Gastrocnemius medialis (tissue), 4 donors: ENCODE measurements at regions of chr6 and their contacts with region 1.

Region 1: DNA sequence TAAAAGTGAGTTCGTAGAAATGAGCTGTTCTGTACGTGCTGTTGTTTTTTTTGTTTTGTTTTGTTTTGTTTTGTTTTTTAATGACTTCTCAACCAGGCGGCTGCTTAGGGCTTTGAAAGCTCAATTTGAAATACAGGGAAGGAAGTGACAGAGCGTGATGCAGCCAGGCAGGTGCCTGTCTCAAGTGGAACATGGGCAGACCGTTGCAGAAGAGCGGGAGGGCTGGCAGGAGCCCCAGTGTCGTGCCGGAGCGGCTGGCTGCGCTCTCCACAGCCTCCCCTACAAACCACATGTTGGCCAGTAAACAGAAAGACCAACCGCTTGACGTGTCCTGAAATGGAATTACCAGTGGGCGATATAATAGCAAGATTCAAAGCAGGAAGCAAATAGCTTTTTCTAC is 164.9 kb upstream of the RREB1 start:
- DNase-seq: peak; percentile 85 to 93
- ATAC-seq: peak; percentile 98 to 99
- H3K4me3 ChIP-seq: peak overlapping the region in 3 of 4 donors; percentile 0 to 24 (median 7)
- H3K27ac ChIP-seq: peak overlapping the region; percentile 81 to 91 (median 83)
- H3K4me1 ChIP-seq: peaks cover 13 to 18% of the 10 kb centered on the region in 2 donors
- H3K27me3 ChIP-seq: no peaks in the 10 kb centered on the region
- CTCF ChIP-seq: no peak
- POLR2A ChIP-seq: no peak

Region 2: DNA sequence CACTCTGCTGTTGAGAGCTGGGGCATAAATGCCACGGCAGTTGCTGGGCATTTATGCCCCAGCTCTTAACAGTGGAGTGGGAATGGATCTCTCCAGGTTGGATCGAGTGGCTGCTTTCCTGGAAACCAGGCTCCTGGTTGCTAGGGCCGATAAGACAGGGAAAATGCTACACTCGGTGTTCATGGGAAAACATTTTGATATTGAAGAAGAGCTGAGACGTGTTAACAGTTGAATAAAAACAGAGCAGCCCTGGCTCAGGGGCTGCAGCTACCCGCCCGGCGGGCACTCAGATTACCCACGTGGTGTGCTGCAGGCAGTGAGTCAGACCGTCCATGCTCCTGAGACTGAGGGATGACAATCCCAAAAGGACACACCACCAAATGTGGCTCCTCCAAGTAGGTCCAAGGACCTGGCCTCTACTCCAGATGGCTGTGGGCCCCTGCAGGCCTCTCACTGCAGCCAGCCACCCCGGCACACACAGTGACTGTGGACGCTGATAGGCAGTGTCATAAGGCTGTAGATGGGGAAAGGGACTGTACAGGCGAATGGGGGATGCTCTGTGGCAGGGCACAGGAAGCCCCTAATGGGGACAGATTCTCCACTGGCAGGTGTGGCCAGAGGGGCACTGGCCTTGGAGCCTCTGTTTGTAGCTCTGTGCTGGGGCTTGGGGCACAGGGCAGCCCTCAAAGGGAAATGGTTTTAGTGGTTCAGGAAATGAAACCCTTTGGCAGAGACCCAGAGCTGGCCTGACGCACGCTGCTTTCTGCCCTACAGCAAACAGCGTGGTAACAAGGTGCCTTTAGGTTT is 116.5 kb before region 1 on chr6:
- in situ Hi-C with region 1: no loop called
- intact Hi-C with region 1: no loop called
- DNase-seq: peak; percentile 88 to 95
- ATAC-seq: peak; percentile 73 to 82
- H3K4me3 ChIP-seq: peak overlapping the region; percentile 32 to 50 (median 39)
- H3K27ac ChIP-seq: peak overlapping the region; percentile 95 to 98 (median 98)
- H3K4me1 ChIP-seq: peaks cover 25 to 31% of the 10 kb centered on the region in 2 donors
- H3K27me3 ChIP-seq: no peaks in the 10 kb centered on the region
- CTCF ChIP-seq: no peak
- POLR2A ChIP-seq: peak; percentile 59 to 70

Region 3: DNA sequence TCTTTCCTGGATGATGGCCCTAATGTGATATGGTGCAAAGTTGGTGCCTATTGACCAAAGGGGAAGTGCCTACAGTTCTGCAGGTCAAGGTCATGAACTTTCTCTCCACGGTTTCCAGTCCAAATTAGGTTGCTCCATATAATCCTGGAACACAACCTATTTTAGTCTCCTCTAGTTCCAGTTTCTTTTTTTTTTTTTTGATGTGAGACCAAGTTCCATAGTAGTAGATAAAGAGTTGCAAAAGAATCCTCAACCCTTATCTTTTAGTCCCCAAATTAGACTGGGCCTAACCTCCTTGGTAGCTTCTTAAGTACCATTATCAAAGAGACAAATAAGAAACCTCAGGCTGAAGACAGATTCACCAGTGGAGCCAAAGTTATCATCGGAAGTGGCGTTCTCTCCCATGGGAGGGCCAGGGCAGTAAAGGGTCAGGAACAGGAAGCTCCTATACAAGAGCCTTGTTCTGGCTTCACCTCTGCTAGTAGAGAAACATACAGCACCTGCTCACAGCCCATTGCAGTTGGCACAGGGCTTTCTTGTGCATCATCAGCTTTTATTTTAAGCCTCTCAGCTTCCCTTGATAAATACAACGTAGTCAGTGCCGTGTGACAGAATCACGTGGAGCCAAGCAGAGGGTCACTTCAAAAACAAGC is 32.8 kb after region 1 on chr6:
- in situ Hi-C with region 1: no loop called
- intact Hi-C with region 1: loop called (anchors 1 kb)
- DNase-seq: peak; percentile 82 to 86
- ATAC-seq: peak; percentile 95 to 96
- H3K4me3 ChIP-seq: no peak overlapping the region
- H3K27ac ChIP-seq: peak overlapping the region; percentile 82 to 93 (median 82)
- H3K4me1 ChIP-seq: peaks cover 18 to 28% of the 10 kb centered on the region in 2 donors
- H3K27me3 ChIP-seq: no peaks in the 10 kb centered on the region
- CTCF ChIP-seq: no peak
- POLR2A ChIP-seq: no peak